ENCODE measurements at regions of chr21 and their contacts with region 1.

Region 1: DNA sequence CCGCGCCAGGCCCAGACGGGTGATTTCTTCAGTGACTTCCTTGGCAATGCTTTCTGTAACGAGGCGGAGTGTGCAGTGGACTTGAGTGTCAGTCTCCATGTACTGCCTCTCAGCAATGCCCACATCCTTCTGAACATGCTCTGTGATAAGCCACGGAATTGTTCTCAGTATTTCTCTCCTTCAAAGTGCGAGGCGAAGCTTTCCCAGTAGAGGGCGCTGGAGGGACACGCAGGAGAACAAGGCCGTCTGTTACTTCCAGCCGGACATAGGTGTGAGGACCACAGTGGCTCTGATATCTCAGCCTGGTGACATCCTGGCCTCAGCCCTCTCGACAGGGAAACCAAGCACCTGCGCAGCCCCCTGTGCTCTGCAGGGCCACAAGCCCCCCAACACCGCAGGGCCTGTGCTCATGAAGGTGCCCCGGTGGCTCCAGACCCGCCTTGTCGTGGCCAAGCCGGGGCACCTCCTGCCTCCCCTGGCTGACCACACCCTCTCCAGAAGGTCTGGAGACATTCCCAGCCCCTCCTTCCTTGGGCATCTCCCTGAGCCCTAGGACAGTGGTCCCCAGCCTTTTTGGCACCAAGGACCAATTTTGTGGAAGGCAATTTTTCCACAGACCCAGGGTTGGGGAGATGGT is 46.1 kb upstream of the BACE2 start:
- DNase-seq: peak; percentile 95

Region 2: GRCh38 chr21:41207401-41208068 is 85.6 kb after region 1 on chr21:
- intact Hi-C with region 1: loop called in 1 of 2 experiments (anchors 10 kb)
- DNase-seq: peak; percentile 91

Region 3: GRCh38 chr21:41460578-41461527 is 338.9 kb after region 1 on chr21:
- intact Hi-C with region 1: loop called in 1 of 2 experiments (anchors 10 kb)
- DNase-seq: peak; percentile 93

Measured in posterior vena cava (tissue), 2 donors.